AG04450 (cell line): ENCODE measurements at regions of chr19 and their contacts with region 1.

Region 1: DNA sequence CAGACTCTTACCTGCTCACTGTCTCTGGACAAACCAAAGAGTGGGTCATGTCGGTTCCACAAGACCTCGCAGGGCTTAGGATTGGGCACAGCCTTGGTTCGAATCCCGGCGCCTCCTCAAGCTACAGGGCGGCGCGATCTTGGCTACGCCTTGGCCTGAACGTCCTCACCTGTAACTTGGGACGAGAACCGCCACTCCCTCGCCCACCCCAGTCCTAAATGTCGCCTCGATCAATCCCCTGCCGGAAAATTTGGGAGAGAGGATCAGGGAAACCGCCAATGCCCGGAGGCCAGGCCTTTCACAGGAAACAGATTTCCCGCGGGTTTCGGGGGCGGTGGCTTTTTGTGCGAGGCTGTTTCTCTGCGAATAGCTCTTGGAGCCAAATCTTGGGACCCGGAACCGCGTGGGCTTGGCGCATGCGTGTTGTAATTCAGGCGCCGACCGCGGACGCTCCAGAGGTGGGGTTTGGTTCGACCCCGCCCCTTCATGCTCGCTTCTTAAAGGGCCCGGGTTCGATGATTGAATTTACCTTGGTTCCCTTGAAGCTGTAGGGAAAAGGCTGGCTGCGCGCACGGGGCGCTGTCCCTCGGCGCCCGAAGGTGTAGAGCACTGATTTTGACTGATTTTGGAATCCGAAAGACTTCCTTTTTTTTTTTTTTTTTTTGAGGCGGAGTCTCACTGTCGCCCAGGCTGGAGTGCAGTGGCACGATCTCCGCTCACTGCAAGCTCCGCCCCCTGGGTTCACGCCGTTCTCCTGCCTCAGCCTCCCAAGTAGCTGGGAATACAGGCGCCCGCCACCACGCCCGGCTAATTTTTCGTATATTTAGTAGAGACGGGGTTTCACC is at the start of gene NR2C2AP:
- DNase-seq: peak; percentile 68
- H3K4me3 ChIP-seq: peak within 1 kb of the TSS; percentile 65
- H3K27ac ChIP-seq: no peak within 1 kb of the TSS
- H3K27me3 ChIP-seq: peaks cover 2% of the 10 kb centered on the region
- CTCF ChIP-seq: no peak
- polyA plus RNA-seq, gene NR2C2AP: 3.8 and 4.1 TPM in 2 replicates

Region 2: DNA sequence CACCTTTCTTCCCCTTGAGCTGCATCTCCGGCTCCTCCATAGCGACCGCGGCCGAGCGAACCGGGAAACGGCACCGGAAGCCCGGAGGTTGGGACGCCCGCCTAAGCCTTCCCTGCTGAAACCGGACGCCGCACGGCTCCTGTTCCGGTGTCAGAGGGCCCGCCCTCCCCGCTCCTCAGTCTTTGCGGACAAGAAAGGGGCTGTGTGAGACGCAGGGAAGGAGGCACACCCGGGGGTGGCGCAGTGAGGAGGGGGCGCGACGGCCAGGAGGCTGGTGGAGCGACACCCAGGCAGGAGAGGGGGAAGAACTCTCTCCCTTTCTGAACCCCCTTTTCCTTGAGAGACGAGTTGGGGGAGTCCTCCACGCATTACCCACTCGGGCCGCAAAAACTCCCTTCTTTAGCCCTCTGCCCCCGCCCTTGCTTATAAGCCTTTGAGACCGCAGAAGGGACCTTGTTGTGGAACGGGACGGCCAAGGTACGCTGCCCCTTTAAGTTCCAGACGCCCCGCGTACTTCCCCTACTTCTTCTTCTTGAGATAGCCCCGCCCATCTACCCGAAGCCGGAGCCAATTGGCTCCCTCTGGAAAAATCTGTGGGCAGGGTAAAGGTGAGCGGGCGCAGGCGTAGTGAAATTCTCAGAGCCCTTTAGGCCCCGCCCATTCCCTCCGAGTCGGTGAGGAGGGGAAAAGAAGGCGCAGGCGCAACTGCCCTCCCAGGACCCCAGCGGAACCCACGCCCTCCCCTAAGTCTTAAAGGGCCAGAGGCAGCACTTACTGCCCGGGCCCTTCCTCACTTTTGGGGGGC is 11.0 kb before region 1 on chr19 and contains the starts of genes BORCS8 and RFXANK:
- CTCF ChIA-PET with region 1: interaction called, 3 read pairs
- POLR2A ChIA-PET with region 1: interaction called, 22 read pairs
- DNase-seq: peak; percentile 98
- H3K4me3 ChIP-seq: peak within 1 kb of the TSS; percentile 98
- H3K27ac ChIP-seq: peak within 1 kb of the TSS; percentile 98
- H3K27me3 ChIP-seq: no peaks in the 10 kb centered on the region
- CTCF ChIP-seq: no peak
- polyA plus RNA-seq, gene BORCS8: 16.6 and 18.5 TPM in 2 replicates
- polyA plus RNA-seq, gene RFXANK: 53.3 and 79.9 TPM in 2 replicates

Region 3: GRCh38 chr19:19285686-19286085 is 82.5 kb after region 1 on chr19:
- CTCF ChIA-PET with region 1: no interaction called
- POLR2A ChIA-PET with region 1: interaction called, 10 read pairs
- DNase-seq: no peak
- H3K4me3 ChIP-seq: no peak overlapping the region
- H3K27ac ChIP-seq: no peak overlapping the region
- H3K27me3 ChIP-seq: no peaks in the 10 kb centered on the region
- CTCF ChIP-seq: no peak

Region 4: DNA sequence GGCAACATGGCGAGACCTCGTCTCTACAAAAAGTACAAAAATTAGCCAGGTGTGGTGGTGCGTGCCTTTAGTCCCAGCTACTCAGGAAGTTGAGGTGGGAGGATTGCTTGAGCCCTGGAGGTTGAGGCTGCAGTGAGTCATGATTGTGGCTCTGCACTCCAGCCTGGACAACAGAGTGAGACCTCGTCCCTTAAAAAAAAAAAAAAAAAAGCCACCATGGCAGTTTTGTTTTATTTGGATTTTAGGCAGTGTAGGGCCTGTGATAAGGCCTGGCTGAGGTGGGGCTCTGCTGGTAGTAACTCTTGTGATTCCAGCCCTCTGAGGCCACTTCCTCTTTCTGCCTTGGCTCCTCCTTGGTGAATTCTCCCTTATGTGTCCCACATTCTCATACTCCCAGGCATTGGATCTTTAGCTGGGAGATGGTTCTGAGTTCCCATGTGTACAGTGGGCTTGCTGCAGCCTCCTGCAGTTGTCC is 241.5 kb after region 1 on chr19:
- CTCF ChIA-PET with region 1: no interaction called
- POLR2A ChIA-PET with region 1: interaction called, 11 read pairs
- DNase-seq: no peak
- H3K4me3 ChIP-seq: no peak overlapping the region
- H3K27ac ChIP-seq: peak overlapping the region; percentile 31
- H3K27me3 ChIP-seq: no peaks in the 10 kb centered on the region
- CTCF ChIP-seq: no peak